ENCODE measurements at regions of chr11 and their contacts with region 1.

Region 1: DNA sequence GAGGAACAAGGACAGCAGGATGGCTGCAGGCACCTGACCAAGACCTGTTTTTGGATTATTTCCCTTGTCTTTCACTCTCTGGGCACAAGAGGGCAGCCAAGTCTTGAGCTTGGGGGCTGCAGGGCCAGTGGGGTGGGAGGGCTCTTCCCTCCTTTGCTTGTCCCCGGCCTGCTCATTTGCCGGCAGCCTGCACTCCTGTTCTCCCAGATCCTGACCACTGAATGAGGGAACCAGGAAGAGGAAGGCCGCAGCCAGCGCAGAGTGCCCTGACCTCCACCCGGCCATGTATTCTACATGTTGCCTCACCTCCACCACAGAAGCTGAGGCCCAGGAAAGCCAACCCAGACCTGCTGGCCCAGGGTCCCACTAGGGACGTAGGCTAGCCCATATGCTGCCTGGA is 15.5 kb upstream of the NNMT start:
- DNase-seq: peak; percentile 80 to 81 (median 80)
- ATAC-seq: peak; percentile 94
- H3K4me3 ChIP-seq: no peak overlapping the region
- H3K27ac ChIP-seq: no peak overlapping the region
- H3K4me1 ChIP-seq: peaks cover 0 to 4% of the 10 kb centered on the region in 2 experiments; a peak in 1 of 5 replicates
- H3K27me3 ChIP-seq: peaks cover 3 to 5% of the 10 kb centered on the region in 2 experiments; a peak in 2 of 5 replicates
- CTCF ChIP-seq: peak; percentile 82 to 92 (median 84)
- EP300 ChIP-seq: no peak
- POLR2A ChIP-seq: no peak
- RAD21 ChIP-seq: peak; percentile 94 to 95

Region 2: GRCh38 chr11:112837162-112837826 is 1443.4 kb before region 1 on chr11:
- CTCF ChIA-PET with region 1: no interaction called
- POLR2A ChIA-PET with region 1: no interaction called
- in situ Hi-C with region 1: loop called (anchors 10 kb)
- intact Hi-C with region 1: no loop called
- DNase-seq: no peak
- ATAC-seq: no peak
- H3K4me3 ChIP-seq: no peak overlapping the region
- H3K27ac ChIP-seq: no peak overlapping the region
- H3K4me1 ChIP-seq: no peaks in the 10 kb centered on the region
- H3K27me3 ChIP-seq: no peaks in the 10 kb centered on the region
- CTCF ChIP-seq: no peak
- EP300 ChIP-seq: no peak
- POLR2A ChIP-seq: no peak
- RAD21 ChIP-seq: no peak

Region 3: DNA sequence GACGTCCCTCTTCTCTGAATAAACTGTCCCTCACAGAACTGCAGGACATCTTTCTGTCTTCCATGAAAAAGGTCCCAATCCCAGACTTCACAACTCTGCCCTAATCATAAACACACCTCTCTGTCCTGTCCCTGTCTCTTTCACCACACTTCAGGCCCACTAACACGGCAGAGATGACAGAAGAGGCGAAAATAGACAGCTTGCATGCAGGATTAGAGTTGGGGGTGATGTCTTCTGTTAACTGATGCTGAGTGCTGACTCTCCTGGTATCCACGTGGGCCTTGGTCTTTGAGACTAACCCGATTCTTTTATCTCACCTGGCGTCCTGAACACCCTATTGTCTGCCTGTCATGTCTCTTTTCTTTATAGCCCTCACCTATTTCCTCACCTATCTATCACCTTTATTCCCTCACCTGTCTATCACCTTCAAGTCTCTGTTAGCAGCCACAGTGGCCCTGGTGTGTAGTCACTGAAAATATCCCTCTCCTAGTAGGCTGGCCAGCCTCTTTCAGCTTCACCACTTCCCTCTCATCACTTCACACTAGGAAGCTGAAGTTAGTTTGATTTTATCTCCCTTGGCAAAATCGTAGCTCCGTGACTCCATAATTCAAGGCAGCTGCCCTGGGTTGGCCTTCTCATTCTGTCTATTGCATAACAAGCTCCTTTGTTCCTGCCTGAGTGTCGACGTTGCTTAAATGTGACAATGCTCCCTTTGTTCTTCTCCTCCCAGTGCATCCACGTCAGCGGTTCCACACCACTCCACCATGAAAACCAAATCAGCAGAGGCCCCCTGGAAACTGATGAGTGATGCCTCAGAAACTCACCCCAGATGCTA is 774.9 kb before region 1 on chr11:
- CTCF ChIA-PET with region 1: no interaction called
- POLR2A ChIA-PET with region 1: no interaction called
- in situ Hi-C with region 1: no loop called
- intact Hi-C with region 1: no loop called
- DNase-seq: no peak
- ATAC-seq: no peak
- H3K4me3 ChIP-seq: no peak overlapping the region
- H3K27ac ChIP-seq: no peak overlapping the region
- H3K4me1 ChIP-seq: no peaks in the 10 kb centered on the region
- H3K27me3 ChIP-seq: peaks cover 5 to 12% of the 10 kb centered on the region in 2 experiments; a peak in 4 of 5 replicates
- CTCF ChIP-seq: no peak
- EP300 ChIP-seq: no peak
- POLR2A ChIP-seq: no peak
- RAD21 ChIP-seq: no peak

Region 4: DNA sequence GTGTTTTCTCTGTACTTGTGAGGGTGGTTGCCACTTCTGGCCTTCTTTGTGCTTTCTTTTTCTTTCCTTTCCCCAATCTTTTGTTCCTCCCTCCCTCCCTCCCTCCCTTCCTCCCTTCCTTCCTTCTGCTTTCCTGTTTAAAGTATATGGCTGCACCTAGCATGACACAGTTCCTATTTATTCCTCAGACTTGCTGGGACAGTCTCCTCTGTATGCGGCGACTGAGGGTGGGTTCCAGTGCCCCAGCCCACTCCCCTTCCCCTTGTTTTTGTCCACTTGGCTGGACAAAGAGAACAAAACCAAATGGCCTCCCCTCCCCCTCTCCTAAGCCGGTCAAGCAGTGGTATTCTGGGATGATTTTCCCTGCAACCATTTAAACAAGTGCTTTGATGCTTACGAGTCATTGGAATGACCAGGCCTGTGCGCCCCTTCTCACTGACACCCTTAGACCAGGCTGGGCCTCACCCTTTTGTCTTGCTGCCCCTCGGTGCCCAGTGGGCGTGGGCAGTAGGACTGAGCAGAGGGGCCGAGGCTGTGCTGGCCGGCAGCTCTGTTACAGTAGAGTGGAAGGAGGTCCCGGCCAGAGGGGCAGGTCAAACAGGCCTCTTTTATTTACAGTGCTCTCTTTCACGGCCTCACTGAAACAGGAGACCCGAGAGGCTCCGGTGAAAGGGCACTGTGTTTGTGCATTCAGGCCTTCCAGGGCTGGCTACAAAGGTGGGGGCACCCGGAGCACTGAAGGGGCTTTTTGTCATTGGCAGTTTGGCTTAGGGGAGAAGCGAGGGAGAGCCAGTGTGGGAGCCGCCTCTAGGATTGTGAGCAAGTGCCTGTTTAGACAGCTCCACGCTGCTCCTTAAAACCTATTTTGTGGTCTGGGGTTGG is 188.9 kb before region 1 on chr11:
- CTCF ChIA-PET with region 1: no interaction called
- POLR2A ChIA-PET with region 1: no interaction called
- in situ Hi-C with region 1: no loop called
- intact Hi-C with region 1: no loop called
- DNase-seq: no peak
- ATAC-seq: peak; percentile 22; the same call in 1 of the 3 replicates
- H3K4me3 ChIP-seq: no peak overlapping the region
- H3K27ac ChIP-seq: no peak overlapping the region
- H3K4me1 ChIP-seq: no peaks in the 10 kb centered on the region; a peak in 1 of 5 replicates
- H3K27me3 ChIP-seq: peaks cover 8 to 42% of the 10 kb centered on the region in 2 experiments
- CTCF ChIP-seq: no peak
- EP300 ChIP-seq: no peak
- POLR2A ChIP-seq: no peak
- RAD21 ChIP-seq: no peak

Region 5: GRCh38 chr11:114317787-114318137 is 37.1 kb after region 1 on chr11:
- CTCF ChIA-PET with region 1: no interaction called
- POLR2A ChIA-PET with region 1: no interaction called
- in situ Hi-C with region 1: no loop called
- intact Hi-C with region 1: loop called (anchors 1 kb)
- DNase-seq: peak in 2 of 4 experiments; percentile 53 to 69
- ATAC-seq: peak; percentile 78
- H3K4me3 ChIP-seq: no peak overlapping the region
- H3K27ac ChIP-seq: no peak overlapping the region
- H3K4me1 ChIP-seq: peaks cover 0 to 10% of the 10 kb centered on the region in 2 experiments; a peak in 3 of 5 replicates
- H3K27me3 ChIP-seq: no peaks in the 10 kb centered on the region
- CTCF ChIP-seq: peak; percentile 66 to 73 (median 70)
- EP300 ChIP-seq: no peak
- POLR2A ChIP-seq: no peak
- RAD21 ChIP-seq: peak; percentile 57 to 77

Region 6: GRCh38 chr11:114340311-114341131 is 59.8 kb after region 1 on chr11:
- CTCF ChIA-PET with region 1: no interaction called
- POLR2A ChIA-PET with region 1: no interaction called
- in situ Hi-C with region 1: no loop called
- intact Hi-C with region 1: loop called (anchors 1 kb)
- DNase-seq: peak; percentile 54 to 78 (median 60)
- ATAC-seq: peak; percentile 91
- H3K4me3 ChIP-seq: peak overlapping the region; percentile 27
- H3K27ac ChIP-seq: peak overlapping the region; percentile 40; the same call in 1 of the 3 replicates
- H3K4me1 ChIP-seq: peaks cover 6 to 11% of the 10 kb centered on the region in 2 experiments; a peak in 3 of 5 replicates
- H3K27me3 ChIP-seq: no peaks in the 10 kb centered on the region
- CTCF ChIP-seq: peak; percentile 80 to 90 (median 84)
- EP300 ChIP-seq: peak; percentile 9; the same call in 1 of the 2 replicates
- POLR2A ChIP-seq: no peak
- RAD21 ChIP-seq: peak; percentile 87 to 89

Region 7: GRCh38 chr11:114400217-114400914 is 119.7 kb after region 1 on chr11 and contains the starts of genes C11orf71 and RBM7:
- CTCF ChIA-PET with region 1: no interaction called
- POLR2A ChIA-PET with region 1: interaction called, 4 read pairs
- in situ Hi-C with region 1: no loop called
- intact Hi-C with region 1: loop called (anchors 2 kb)
- DNase-seq: peak; percentile 90 to 99 (median 92)
- ATAC-seq: peak; percentile 90
- H3K4me3 ChIP-seq: peak within 1 kb of the TSS; percentile 54
- H3K27ac ChIP-seq: peak within 1 kb of the TSS; percentile 99
- H3K4me1 ChIP-seq: peaks cover 3 to 25% of the 10 kb centered on the region in 2 experiments
- H3K27me3 ChIP-seq: no peaks in the 10 kb centered on the region
- CTCF ChIP-seq: peak in 1 of 3 experiments; percentile 18; a peak in 1 of 6 replicates
- EP300 ChIP-seq: peak; percentile 28; the same call in 1 of the 2 replicates
- POLR2A ChIP-seq: peak; percentile 98
- RAD21 ChIP-seq: no peak
- polyA plus RNA-seq, gene C11orf71: 2.9 to 4.3 TPM
- polyA plus RNA-seq, gene RBM7: 62.7 to 76.8 TPM

Region 8: GRCh38 chr11:114586797-114587196 is 306.1 kb after region 1 on chr11:
- CTCF ChIA-PET with region 1: no interaction called
- POLR2A ChIA-PET with region 1: no interaction called
- in situ Hi-C with region 1: no loop called
- intact Hi-C with region 1: loop called (anchors 1 kb)
- DNase-seq: peak in 1 of 4 experiments; percentile 18
- ATAC-seq: no peak; the same call in 2 of the 3 replicates
- H3K4me3 ChIP-seq: no peak overlapping the region
- H3K27ac ChIP-seq: no peak overlapping the region
- H3K4me1 ChIP-seq: no peaks in the 10 kb centered on the region
- H3K27me3 ChIP-seq: no peaks in the 10 kb centered on the region
- CTCF ChIP-seq: peak in 2 of 3 experiments; percentile 50 to 54; a peak in 2 of 6 replicates
- EP300 ChIP-seq: no peak
- POLR2A ChIP-seq: no peak
- RAD21 ChIP-seq: peak; percentile 40 to 58

Region 9: GRCh38 chr11:114762408-114762807 is 481.7 kb after region 1 on chr11:
- CTCF ChIA-PET with region 1: interaction called, 16 read pairs
- POLR2A ChIA-PET with region 1: no interaction called
- in situ Hi-C with region 1: loop called (anchors 10 kb)
- intact Hi-C with region 1: loop called (anchors 1 kb)
- DNase-seq: peak; percentile 31 to 59 (median 44)
- ATAC-seq: peak; percentile 95
- H3K4me3 ChIP-seq: no peak overlapping the region
- H3K27ac ChIP-seq: no peak overlapping the region
- H3K4me1 ChIP-seq: no peaks in the 10 kb centered on the region
- H3K27me3 ChIP-seq: no peaks in the 10 kb centered on the region
- CTCF ChIP-seq: peak; percentile 72 to 82 (median 77)
- EP300 ChIP-seq: no peak
- POLR2A ChIP-seq: no peak
- RAD21 ChIP-seq: peak; percentile 80 to 83